CD4-positive, alpha-beta T cell (primary cell): ENCODE measurements at regions of chrX and their contacts with region 1.

Region 1: DNA sequence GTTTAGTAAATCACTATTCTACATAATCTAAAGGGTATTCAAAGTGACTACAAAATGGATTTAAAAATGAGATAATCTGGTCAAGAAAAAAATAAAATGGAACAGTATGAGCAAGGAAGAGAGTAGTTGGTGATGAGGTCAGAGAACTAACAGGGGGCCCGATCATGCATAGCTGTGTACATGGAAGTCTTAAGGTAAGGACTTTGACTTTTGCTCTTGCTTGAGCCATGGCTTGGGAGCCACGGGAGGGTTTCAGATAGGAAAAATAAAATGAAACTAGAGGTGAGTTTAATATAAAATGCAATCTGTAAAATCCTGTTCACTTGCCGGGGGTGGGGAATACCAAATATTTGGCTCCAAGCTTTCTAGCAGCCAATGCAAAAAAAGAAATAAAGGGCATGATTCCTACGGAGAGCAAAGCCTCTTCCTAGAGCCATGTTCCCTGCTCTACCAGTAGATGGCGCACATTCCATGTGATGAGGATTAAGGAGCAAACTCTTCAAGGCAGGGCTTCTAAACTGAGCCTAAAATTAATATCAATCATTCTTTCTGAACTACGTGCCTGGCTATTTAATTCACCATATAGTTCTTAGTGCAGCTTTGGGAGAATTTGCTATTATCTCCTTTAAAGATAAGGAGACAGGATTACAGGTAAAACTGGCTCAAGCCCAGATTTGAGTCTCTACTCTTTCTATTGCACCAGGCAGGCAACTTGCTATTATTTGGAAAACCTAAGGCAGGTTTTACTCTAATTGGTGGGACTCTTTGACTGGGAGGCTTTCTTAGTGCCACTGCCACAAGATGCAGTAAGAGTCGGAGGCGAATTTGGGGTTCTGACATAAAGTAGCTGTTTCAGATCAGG is 6.8 kb upstream of the CLCN5 start:
- DNase-seq: peak; percentile 2 to 75 (median 34)
- ATAC-seq: peak; percentile 81
- H3K4me3 ChIP-seq: no peak overlapping the region
- H3K4me3 Mint-ChIP-seq: no peak overlapping the region
- H3K27ac ChIP-seq: no peak overlapping the region
- H3K27ac Mint-ChIP-seq: no peak overlapping the region
- H3K4me1 ChIP-seq: no peaks in the 10 kb centered on the region
- H3K4me1 Mint-ChIP-seq: peaks cover 5% of the 10 kb centered on the region
- H3K27me3 ChIP-seq: no peaks in the 10 kb centered on the region
- H3K27me3 Mint-ChIP-seq: no peaks in the 10 kb centered on the region
- CTCF ChIP-seq: peak; percentile 75

Region 2: GRCh38 chrX:49884290-49884862 is 31.2 kb before region 1 on chrX:
- CTCF ChIA-PET with region 1: interaction called, 10 read pairs
- POLR2A ChIA-PET with region 1: no interaction called
- intact Hi-C with region 1: loop called (anchors 2 to 5 kb)
- DNase-seq: peak; percentile 18 to 72 (median 45)
- ATAC-seq: no peak
- H3K4me3 ChIP-seq: no peak overlapping the region
- H3K4me3 Mint-ChIP-seq: peak overlapping the region; percentile 62
- H3K27ac ChIP-seq: no peak overlapping the region
- H3K27ac Mint-ChIP-seq: no peak overlapping the region
- H3K4me1 ChIP-seq: peaks cover 21% of the 10 kb centered on the region
- H3K4me1 Mint-ChIP-seq: peaks cover 19% of the 10 kb centered on the region
- H3K27me3 ChIP-seq: no peaks in the 10 kb centered on the region
- H3K27me3 Mint-ChIP-seq: no peaks in the 10 kb centered on the region
- CTCF ChIP-seq: peak; percentile 54

Region 3: GRCh38 chrX:49956040-49956722 is 40.6 kb after region 1 on chrX:
- CTCF ChIA-PET with region 1: no interaction called
- POLR2A ChIA-PET with region 1: no interaction called
- intact Hi-C with region 1: no loop called
- DNase-seq: no peak
- ATAC-seq: no peak
- H3K4me3 ChIP-seq: no peak overlapping the region
- H3K4me3 Mint-ChIP-seq: no peak overlapping the region
- H3K27ac ChIP-seq: no peak overlapping the region
- H3K27ac Mint-ChIP-seq: no peak overlapping the region
- H3K4me1 ChIP-seq: no peaks in the 10 kb centered on the region
- H3K4me1 Mint-ChIP-seq: no peaks in the 10 kb centered on the region
- H3K27me3 ChIP-seq: no peaks in the 10 kb centered on the region
- H3K27me3 Mint-ChIP-seq: no peaks in the 10 kb centered on the region
- CTCF ChIP-seq: no peak

Region 4: GRCh38 chrX:50081282-50081889 is 165.8 kb after region 1 on chrX:
- CTCF ChIA-PET with region 1: no interaction called
- POLR2A ChIA-PET with region 1: no interaction called
- intact Hi-C with region 1: loop called in 1 of 2 experiments (anchors 10 kb)
- DNase-seq: peak in 2 of 14 experiments; percentile 2 to 3
- ATAC-seq: no peak
- H3K4me3 ChIP-seq: no peak overlapping the region
- H3K4me3 Mint-ChIP-seq: no peak overlapping the region
- H3K27ac ChIP-seq: no peak overlapping the region
- H3K27ac Mint-ChIP-seq: no peak overlapping the region
- H3K4me1 ChIP-seq: no peaks in the 10 kb centered on the region
- H3K4me1 Mint-ChIP-seq: no peaks in the 10 kb centered on the region
- H3K27me3 ChIP-seq: no peaks in the 10 kb centered on the region
- H3K27me3 Mint-ChIP-seq: no peaks in the 10 kb centered on the region
- CTCF ChIP-seq: no peak

Region 5: DNA sequence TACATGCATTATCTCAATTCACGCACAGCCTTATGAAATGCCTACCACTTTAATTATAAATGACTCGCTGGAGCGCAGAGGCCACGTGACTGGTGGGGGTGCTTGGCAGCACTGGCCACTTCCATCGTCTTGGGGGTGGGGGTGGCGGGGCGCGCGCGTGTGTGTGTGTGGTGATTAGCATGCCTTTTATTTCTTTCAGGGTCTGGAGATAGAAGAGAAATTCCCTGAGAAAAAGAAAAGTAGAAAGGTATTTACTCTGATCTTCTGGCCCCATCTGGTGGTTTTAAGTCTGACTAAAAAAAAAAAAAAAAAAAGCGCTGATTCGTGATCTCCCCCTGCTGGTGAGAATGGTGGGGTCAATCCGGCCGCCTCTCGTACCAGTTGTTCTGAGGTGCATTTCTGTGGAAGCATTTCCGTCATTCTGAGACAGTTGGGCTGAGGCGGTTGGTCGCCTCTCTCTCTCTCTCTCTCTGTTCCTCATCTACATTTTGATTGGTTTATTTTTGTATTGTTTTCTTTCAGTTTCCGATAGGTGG is 288.8 kb after region 1 on chrX and contains the start of gene CCNB3:
- CTCF ChIA-PET with region 1: no interaction called
- POLR2A ChIA-PET with region 1: no interaction called
- intact Hi-C with region 1: loop called in 1 of 2 experiments (anchors 2 kb)
- DNase-seq: peak; percentile 51 to 89 (median 59)
- ATAC-seq: peak; percentile 97
- H3K4me3 ChIP-seq: peak within 1 kb of the TSS; percentile 48
- H3K4me3 Mint-ChIP-seq: peak within 1 kb of the TSS; percentile 90
- H3K27ac ChIP-seq: peak within 1 kb of the TSS in 1 of 2 donors; percentile 55
- H3K27ac Mint-ChIP-seq: peak within 1 kb of the TSS; percentile 87
- H3K4me1 ChIP-seq: peaks cover 6% of the 10 kb centered on the region
- H3K4me1 Mint-ChIP-seq: peaks cover 17% of the 10 kb centered on the region
- H3K27me3 ChIP-seq: no peaks in the 10 kb centered on the region
- H3K27me3 Mint-ChIP-seq: no peaks in the 10 kb centered on the region
- CTCF ChIP-seq: peak; percentile 61
- total RNA-seq, gene CCNB3: 0.19 to 0.39 TPM

Region 6: GRCh38 chrX:50579955-50580354 is 664.4 kb after region 1 on chrX:
- CTCF ChIA-PET with region 1: no interaction called
- POLR2A ChIA-PET with region 1: no interaction called
- intact Hi-C with region 1: loop called (anchors 1 kb)
- DNase-seq: peak in 9 of 14 experiments; percentile 1 to 59 (median 3)
- ATAC-seq: no peak
- H3K4me3 ChIP-seq: no peak overlapping the region
- H3K4me3 Mint-ChIP-seq: no peak overlapping the region
- H3K27ac ChIP-seq: no peak overlapping the region
- H3K27ac Mint-ChIP-seq: no peak overlapping the region
- H3K4me1 ChIP-seq: no peaks in the 10 kb centered on the region
- H3K4me1 Mint-ChIP-seq: no peaks in the 10 kb centered on the region
- H3K27me3 ChIP-seq: no peaks in the 10 kb centered on the region
- H3K27me3 Mint-ChIP-seq: peaks cover 10% of the 10 kb centered on the region
- CTCF ChIP-seq: no peak